Activated CD4-positive, alpha-beta T cell treated with anti-CD3 and anti-CD28 coated beads for 36 hours (primary cell): ENCODE measurements at regions of chr11 and their contacts with region 1.

Region 1: GRCh38 chr11:114180301-114181055 is 115.7 kb upstream of the NNMT start:
- DNase-seq: peak; percentile 37
- ATAC-seq: peak; percentile 24
- H3K4me3 Mint-ChIP-seq: no peak overlapping the region
- H3K27ac Mint-ChIP-seq: no peak overlapping the region
- H3K4me1 Mint-ChIP-seq: peaks cover 59% of the 10 kb centered on the region
- H3K27me3 Mint-ChIP-seq: no peaks in the 10 kb centered on the region

Region 2: GRCh38 chr11:113634940-113635575 is 545.4 kb before region 1 on chr11:
- CTCF ChIA-PET with region 1: no interaction called
- POLR2A ChIA-PET with region 1: no interaction called
- intact Hi-C with region 1: no loop called
- DNase-seq: no peak
- ATAC-seq: no peak
- H3K4me3 Mint-ChIP-seq: no peak overlapping the region
- H3K27ac Mint-ChIP-seq: no peak overlapping the region
- H3K4me1 Mint-ChIP-seq: no peaks in the 10 kb centered on the region
- H3K27me3 Mint-ChIP-seq: peaks cover 14% of the 10 kb centered on the region

Region 3: DNA sequence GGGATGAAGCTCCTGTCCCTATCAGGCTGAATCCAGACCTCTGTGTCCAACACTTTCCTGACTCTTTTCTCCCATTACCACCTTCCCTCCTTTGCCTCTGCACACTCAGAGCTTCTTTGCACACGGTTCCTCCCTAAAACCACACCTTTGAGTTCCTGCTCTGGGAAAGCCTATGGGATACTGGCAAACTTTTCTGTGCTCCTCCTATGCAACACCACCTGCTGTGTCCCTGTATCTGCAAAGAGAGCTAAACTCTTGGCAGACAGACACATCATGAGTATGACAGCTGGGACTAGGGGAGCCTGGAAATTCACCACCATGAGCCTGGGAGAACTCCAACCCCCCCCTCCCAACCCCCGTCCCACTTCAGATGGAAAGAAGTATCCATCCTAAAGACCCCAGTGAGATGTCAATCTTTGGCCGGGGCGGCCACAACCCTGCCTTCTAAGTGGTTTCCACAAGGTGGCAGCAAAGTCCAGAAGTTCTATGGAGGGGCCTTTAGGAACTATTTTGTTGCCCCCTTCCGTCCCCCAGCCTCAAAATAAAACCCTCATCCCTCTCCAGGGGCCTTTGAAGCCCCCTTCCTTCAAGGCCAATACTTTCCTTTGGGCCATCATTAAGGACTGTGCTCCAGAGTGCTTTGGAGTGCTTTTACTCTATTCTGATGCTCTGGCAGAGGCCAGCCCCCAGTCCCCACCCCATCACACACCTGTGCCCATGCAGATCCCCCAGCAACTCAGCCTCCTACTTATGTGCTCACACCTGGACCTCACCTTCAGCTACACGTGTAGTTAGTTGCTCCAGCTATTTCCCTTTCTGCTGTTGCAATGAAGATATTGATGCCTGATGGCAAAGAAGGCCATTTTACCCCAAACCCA is 186.2 kb before region 1 on chr11:
- CTCF ChIA-PET with region 1: interaction called, 10 read pairs
- POLR2A ChIA-PET with region 1: no interaction called
- intact Hi-C with region 1: no loop called
- DNase-seq: peak; percentile 51
- ATAC-seq: peak; percentile 51
- H3K4me3 Mint-ChIP-seq: no peak overlapping the region
- H3K27ac Mint-ChIP-seq: no peak overlapping the region
- H3K4me1 Mint-ChIP-seq: no peaks in the 10 kb centered on the region
- H3K27me3 Mint-ChIP-seq: peaks cover 14% of the 10 kb centered on the region

Region 4: DNA sequence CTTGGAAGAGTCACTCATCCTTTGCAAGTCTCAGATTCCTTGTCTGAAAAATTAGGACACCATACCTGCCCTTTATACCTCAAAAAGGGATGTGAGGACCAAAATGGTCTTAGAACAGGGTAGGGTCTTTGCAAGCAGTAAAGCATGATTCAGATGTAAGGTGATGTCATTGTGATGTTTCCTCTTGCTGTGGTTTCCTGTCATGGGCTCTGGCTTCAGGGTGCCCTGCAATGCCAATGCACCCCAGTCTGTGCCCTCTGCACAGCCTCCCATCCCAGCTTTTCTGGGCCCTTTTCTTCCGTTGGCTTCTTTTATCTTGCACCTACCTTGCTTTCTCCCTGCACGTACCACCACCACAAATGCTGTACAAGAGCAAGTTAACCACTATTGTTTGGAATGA is 27.9 kb after region 1 on chr11:
- CTCF ChIA-PET with region 1: no interaction called
- POLR2A ChIA-PET with region 1: no interaction called
- intact Hi-C with region 1: no loop called
- DNase-seq: peak; percentile 35
- ATAC-seq: peak; percentile 99
- H3K4me3 Mint-ChIP-seq: no peak overlapping the region
- H3K27ac Mint-ChIP-seq: peak overlapping the region; percentile 25
- H3K4me1 Mint-ChIP-seq: peaks cover 14% of the 10 kb centered on the region
- H3K27me3 Mint-ChIP-seq: no peaks in the 10 kb centered on the region